H1 (cell line): ENCODE measurements at regions of chr20 and their contacts with region 1.

Region 1: DNA sequence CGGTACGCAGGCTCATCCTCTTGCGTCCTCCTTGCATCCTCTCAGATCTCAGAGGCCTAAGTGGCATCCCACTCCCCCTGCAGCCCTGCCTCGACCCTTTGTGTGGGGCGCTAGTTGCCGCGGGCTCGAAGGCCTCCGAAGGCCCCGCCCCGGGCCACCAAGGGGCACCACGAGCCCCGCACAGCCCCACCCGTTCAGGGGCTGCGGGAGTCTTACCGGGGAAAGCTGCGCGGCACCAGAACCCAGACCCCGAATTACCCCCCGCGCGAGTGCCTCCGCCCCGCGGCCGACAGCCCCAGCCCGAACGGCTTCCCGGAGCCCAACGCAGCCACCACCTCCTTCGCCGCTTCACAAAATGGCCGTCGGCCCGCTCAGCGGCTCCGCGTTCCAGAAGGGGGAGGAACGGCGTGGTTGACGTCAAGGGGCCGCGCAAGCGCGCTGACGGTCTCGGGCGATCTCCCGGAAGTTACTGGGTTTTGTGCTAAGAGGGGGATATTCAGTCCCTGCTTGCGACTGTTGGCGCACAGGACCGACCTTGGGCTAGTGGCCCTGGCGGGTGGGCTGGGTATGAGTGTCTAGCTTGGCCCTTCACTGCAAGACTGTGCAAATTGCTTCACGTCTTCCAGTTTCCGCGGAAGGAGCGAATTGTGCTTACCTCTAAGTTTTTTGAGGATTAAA is at the starts of genes CPNE1 and RBM12:
- DNase-seq: peak; percentile 84 to 95
- H3K4me3 ChIP-seq: peak within 1 kb of the TSS; percentile 92 to 100 (median 98)
- H3K27ac ChIP-seq: peak within 1 kb of the TSS; percentile 97
- H3K4me1 ChIP-seq: peaks cover 0 to 7% (median 0%) of the 10 kb centered on the region in 4 experiments; a peak in 3 of 7 replicates
- H3K27me3 ChIP-seq: no peaks in the 10 kb centered on the region
- CTCF ChIP-seq: no peak
- EP300 ChIP-seq: peak in 1 of 2 experiments; percentile 22; a peak in 1 of 3 replicates
- POLR2A ChIP-seq: peak; percentile 95 to 96
- RAD21 ChIP-seq: no peak
- total RNA-seq, gene CPNE1: 294 and 299 TPM in 2 replicates
- total RNA-seq, gene RBM12: 175 and 187 TPM in 2 replicates

Region 2: DNA sequence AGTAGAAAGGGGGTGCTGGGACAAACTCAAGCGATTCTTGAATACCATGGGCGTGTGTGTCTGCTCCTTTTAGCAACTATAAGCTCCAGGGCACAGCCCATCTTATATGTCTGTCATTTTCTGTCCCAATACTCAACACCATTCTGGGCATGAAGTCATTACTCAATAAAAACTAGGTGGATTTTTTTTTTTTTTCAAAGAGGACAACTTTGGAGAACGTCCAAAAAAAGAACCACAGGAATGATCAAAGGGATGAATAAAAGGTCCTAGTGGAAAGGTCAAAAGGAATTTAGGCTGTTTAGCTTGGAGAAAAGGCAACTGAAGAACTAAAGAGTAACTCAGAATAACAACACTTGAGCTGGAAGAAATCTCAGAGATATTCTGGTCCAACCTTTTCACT is 277.3 kb before region 1 on chr20:
- CTCF ChIA-PET with region 1: no interaction called
- POLR2A ChIA-PET with region 1: no interaction called
- DNase-seq: no peak
- H3K4me3 ChIP-seq: no peak overlapping the region
- H3K27ac ChIP-seq: no peak overlapping the region
- H3K4me1 ChIP-seq: no peaks in the 10 kb centered on the region
- H3K27me3 ChIP-seq: no peaks in the 10 kb centered on the region
- CTCF ChIP-seq: no peak
- EP300 ChIP-seq: no peak
- POLR2A ChIP-seq: no peak
- RAD21 ChIP-seq: no peak

Region 3: GRCh38 chr20:35619196-35620095 is 45.2 kb before region 1 on chr20:
- CTCF ChIA-PET with region 1: interaction called, 6 read pairs
- POLR2A ChIA-PET with region 1: interaction called, 25 read pairs
- DNase-seq: peak; percentile 73 to 95
- H3K4me3 ChIP-seq: peak overlapping the region; percentile 44 to 63 (median 55)
- H3K27ac ChIP-seq: no peak overlapping the region
- H3K4me1 ChIP-seq: peaks cover 0 to 19% (median 8%) of the 10 kb centered on the region in 4 experiments; a peak in 6 of 7 replicates
- H3K27me3 ChIP-seq: peaks cover 0 to 8% (median 7%) of the 10 kb centered on the region in 4 experiments; a peak in 3 of 7 replicates
- CTCF ChIP-seq: peak; percentile 64 to 79 (median 71)
- EP300 ChIP-seq: no peak
- POLR2A ChIP-seq: peak; percentile 26 to 79
- RAD21 ChIP-seq: peak; percentile 29 to 46; a peak in 3 of 4 replicates

Region 4: DNA sequence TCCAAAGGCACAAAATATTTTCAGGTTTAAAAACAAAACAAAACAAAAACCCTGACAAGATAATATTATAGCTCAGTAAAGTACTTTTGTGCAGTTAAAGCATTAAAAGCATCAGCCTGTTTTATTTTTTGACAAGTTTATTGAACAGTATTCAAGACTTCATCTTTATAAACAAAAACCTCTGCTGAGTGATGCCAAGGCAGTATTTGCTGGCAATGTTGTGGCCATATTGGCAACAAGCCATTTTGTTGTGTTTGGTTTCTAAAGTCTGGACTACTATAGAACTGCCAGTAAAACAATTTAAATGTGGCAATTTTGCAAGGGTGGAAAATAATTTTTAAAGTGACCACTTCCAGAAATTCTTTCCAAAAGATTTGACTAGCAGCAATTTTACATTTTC is 15.8 kb before region 1 on chr20:
- CTCF ChIA-PET with region 1: interaction called, 3 read pairs
- POLR2A ChIA-PET with region 1: interaction called, 49 read pairs
- DNase-seq: no peak
- H3K4me3 ChIP-seq: no peak overlapping the region
- H3K27ac ChIP-seq: no peak overlapping the region
- H3K4me1 ChIP-seq: no peaks in the 10 kb centered on the region
- H3K27me3 ChIP-seq: no peaks in the 10 kb centered on the region
- CTCF ChIP-seq: no peak
- EP300 ChIP-seq: no peak
- POLR2A ChIP-seq: no peak
- RAD21 ChIP-seq: no peak

Region 5: DNA sequence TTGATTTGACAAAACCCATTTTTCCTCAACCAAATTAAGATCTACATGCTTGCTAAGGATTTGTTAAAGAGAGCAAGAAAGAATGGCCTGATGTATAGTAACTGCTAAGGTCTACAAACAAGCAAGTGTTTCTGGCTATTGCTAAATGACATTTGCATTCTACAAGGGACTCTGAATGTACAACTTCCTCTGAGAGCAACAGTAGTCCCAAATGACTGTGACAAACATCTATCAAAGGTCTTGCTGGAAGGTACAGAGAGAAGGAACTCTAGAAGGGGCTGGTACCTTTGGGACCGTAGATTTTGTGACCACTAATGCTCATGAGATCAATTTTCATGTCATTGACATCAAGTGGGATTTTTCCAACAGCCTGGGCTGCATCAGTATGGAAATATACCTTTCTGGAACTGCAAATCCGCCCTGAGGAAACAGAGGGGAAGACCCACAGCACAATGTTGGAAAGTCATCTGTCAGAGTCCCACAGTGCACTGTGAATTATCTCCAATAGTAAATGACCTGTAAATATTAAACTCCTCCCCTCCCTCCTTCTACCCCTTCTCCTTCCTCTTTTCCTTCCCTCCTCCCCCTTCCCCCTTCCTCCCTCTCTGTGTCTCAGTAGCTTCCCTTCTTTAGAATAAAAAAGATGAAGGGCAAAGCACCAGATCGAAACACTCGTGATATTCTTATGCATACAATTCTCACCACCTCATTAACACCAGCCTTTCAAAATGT is 15.9 kb after region 1 on chr20:
- CTCF ChIA-PET with region 1: interaction called, 4 read pairs
- POLR2A ChIA-PET with region 1: interaction called, 15 read pairs
- DNase-seq: no peak
- H3K4me3 ChIP-seq: no peak overlapping the region
- H3K27ac ChIP-seq: no peak overlapping the region
- H3K4me1 ChIP-seq: no peaks in the 10 kb centered on the region
- H3K27me3 ChIP-seq: no peaks in the 10 kb centered on the region
- CTCF ChIP-seq: no peak
- EP300 ChIP-seq: no peak
- POLR2A ChIP-seq: no peak
- RAD21 ChIP-seq: no peak

Region 6: GRCh38 chr20:35954200-35954906 is 289.7 kb after region 1 on chr20 and contains the start of gene SCAND1:
- CTCF ChIA-PET with region 1: no interaction called
- POLR2A ChIA-PET with region 1: interaction called, 19 read pairs
- DNase-seq: peak; percentile 95
- H3K4me3 ChIP-seq: peak within 1 kb of the TSS; percentile 75 to 95 (median 88)
- H3K27ac ChIP-seq: peak within 1 kb of the TSS; percentile 97
- H3K4me1 ChIP-seq: peaks cover 0 to 3% (median 0%) of the 10 kb centered on the region in 4 experiments; a peak in 2 of 7 replicates
- H3K27me3 ChIP-seq: no peaks in the 10 kb centered on the region
- CTCF ChIP-seq: peak; percentile 95 to 99 (median 98)
- EP300 ChIP-seq: peak in 1 of 2 experiments; percentile 73; a peak in 2 of 3 replicates
- POLR2A ChIP-seq: peak; percentile 89 to 98
- RAD21 ChIP-seq: peak; percentile 47 to 55
- total RNA-seq, gene SCAND1: 73.1 and 86.0 TPM in 2 replicates